Ascending aorta (tissue), 2 donors: ENCODE measurements at regions of chr16 and their contacts with region 1.

Region 1: GRCh38 chr16:26569793-26570192 is 496.9 kb upstream of the C16orf82 start:
- DNase-seq: no peak
- H3K4me3 ChIP-seq: no peak overlapping the region
- H3K27ac ChIP-seq: no peak overlapping the region
- H3K4me1 ChIP-seq: no peaks in the 10 kb centered on the region
- H3K27me3 ChIP-seq: no peaks in the 10 kb centered on the region
- CTCF ChIP-seq: peak in 1 of 3 experiments; percentile 35

Region 2: DNA sequence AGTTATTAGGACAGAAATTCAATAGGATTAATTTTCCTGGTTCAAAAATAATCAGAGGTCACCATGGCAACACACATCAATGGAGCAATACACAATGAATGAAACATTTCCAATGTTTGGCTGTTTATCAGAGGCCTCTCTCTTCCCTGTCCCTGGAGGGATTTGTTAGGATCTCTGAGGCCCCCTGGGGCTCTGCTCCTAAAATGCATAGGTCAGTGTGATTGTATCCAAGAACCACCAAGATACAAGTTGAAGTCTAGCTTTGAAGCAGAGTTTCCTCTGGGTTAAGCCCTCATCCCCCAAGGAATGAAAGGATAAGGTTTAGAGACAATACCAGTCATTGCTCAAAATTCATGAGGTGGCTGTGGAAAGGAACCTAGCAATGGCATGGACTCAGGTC is 64.3 kb before region 1 on chr16:
- intact Hi-C with region 1: loop called (anchors 10 kb)
- DNase-seq: no peak
- H3K4me3 ChIP-seq: no peak overlapping the region
- H3K27ac ChIP-seq: no peak overlapping the region
- H3K4me1 ChIP-seq: no peaks in the 10 kb centered on the region
- H3K27me3 ChIP-seq: no peaks in the 10 kb centered on the region
- CTCF ChIP-seq: no peak

Region 3: GRCh38 chr16:26643519-26643918 is 73.7 kb after region 1 on chr16:
- intact Hi-C with region 1: no loop called
- DNase-seq: no peak
- H3K4me3 ChIP-seq: no peak overlapping the region
- H3K27ac ChIP-seq: no peak overlapping the region
- H3K4me1 ChIP-seq: no peaks in the 10 kb centered on the region
- H3K27me3 ChIP-seq: no peaks in the 10 kb centered on the region
- CTCF ChIP-seq: no peak